ENCODE measurements at regions of chr13 and their contacts with region 1.

Region 1: DNA sequence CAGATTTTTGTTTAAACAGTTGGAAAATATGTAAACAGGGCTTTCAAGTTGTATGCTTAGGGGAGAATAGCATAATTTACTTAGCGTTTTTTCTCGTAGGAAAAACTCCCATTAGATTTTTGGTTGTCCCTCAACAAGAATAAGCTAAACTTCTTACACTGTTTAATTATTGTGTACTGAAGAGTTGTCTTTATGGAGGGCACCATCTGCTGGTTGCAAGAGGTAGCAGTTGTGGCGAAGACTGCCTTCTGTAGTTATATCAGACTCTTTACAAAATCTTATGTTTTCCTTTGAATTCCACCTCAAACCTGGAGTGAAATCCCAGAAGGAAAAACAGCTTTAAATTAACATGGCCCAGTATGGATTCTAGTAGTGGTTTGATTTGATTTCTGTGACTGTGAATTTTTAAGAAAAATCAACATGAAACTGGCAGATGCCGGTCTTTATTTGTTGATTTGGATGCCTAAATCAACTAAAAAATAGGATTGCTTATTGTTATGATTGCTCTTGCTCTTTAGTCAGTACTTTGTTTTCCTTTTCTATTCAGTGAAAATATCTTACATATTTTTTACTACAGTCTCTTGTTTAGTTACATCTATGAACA is 53.4 kb downstream of the PDS5B start:
- DNase-seq: peak; percentile 24
- H3K4me3 ChIP-seq: no peak overlapping the region
- H3K27ac ChIP-seq: no peak overlapping the region
- H3K27me3 ChIP-seq: no peaks in the 10 kb centered on the region
- CTCF ChIP-seq: peak; percentile 86

Region 2: GRCh38 chr13:32622827-32623226 is 16.8 kb before region 1 on chr13:
- CTCF ChIA-PET with region 1: interaction called, 11 read pairs
- POLR2A ChIA-PET with region 1: no interaction called
- DNase-seq: no peak
- H3K4me3 ChIP-seq: no peak overlapping the region
- H3K27ac ChIP-seq: no peak overlapping the region
- H3K27me3 ChIP-seq: no peaks in the 10 kb centered on the region
- CTCF ChIP-seq: no peak

Region 3: GRCh38 chr13:32650705-32651311 is 11.2 kb after region 1 on chr13:
- CTCF ChIA-PET with region 1: interaction called, 89 read pairs
- POLR2A ChIA-PET with region 1: no interaction called
- DNase-seq: no peak
- H3K4me3 ChIP-seq: no peak overlapping the region
- H3K27ac ChIP-seq: no peak overlapping the region
- H3K27me3 ChIP-seq: no peaks in the 10 kb centered on the region
- CTCF ChIP-seq: peak; percentile 75

Measured in AG04450 (cell line).